Lower leg skin (tissue), 4 donors: ENCODE measurements at regions of chr1 and their contacts with region 1.

Region 1: GRCh38 chr1:166588741-166589140 is 250.5 kb upstream of the POGK start:
- DNase-seq: no peak
- H3K4me3 ChIP-seq: no peak overlapping the region
- CTCF ChIP-seq: no peak
- POLR2A ChIP-seq: no peak

Region 2: DNA sequence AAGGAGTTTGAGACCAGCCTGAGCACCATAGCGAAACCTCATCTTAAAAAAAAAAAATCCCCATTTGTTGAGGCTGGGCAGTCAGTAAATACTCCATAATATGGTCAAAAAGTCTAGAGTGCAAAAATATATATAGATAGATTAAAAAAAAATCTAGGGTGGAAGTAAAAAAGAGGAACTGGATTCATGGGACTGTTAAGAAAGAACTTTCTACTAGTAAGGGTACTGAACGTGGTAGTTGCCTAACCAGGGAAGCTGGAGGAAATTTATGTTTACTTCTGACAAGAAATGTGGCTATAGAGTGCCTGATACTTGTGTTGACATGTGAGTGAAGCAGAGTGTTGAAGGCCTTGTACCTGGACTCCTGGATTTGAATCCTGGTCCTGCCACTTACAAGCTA is 156.1 kb before region 1 on chr1:
- intact Hi-C with region 1: loop called (anchors 5 kb)
- DNase-seq: no peak
- H3K4me3 ChIP-seq: no peak overlapping the region
- CTCF ChIP-seq: no peak
- POLR2A ChIP-seq: no peak